K562 (cell line): ENCODE measurements at regions of chr5 and their contacts with region 1.

Region 1: DNA sequence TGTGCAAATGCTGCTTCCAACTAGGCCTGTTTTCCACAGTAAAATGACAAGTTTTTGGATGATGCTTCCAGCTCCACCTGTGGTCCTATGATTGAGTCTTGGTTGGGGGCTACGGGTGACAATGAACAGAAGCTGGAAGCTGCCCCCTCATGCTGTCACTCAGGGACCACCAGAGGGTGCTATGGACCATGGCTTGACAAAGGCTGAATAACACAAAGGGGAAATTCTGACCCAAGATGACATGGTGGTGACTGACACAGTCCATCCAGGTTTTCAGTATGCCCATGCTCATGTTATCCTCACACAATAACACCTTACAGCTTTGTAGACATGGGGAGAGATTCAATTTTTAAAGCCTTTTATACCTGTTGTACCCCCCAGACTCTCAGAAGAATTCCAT is 23.9 kb upstream of the SAP30L start:
- DNase-seq: peak; percentile 45 to 66 (median 56)
- ATAC-seq: peak; percentile 94
- H3K4me3 ChIP-seq: no peak overlapping the region
- H3K27ac ChIP-seq: no peak overlapping the region
- H3K4me1 ChIP-seq: peaks cover 0 to 8% of the 10 kb centered on the region in 2 experiments; a peak in 2 of 5 replicates
- H3K27me3 ChIP-seq: no peaks in the 10 kb centered on the region
- CTCF ChIP-seq: peak; percentile 67 to 80 (median 73)
- EP300 ChIP-seq: no peak
- POLR2A ChIP-seq: no peak
- RAD21 ChIP-seq: peak; percentile 21 to 64; a peak in 2 of 4 replicates

Region 2: GRCh38 chr5:154520861-154521453 is 99.1 kb after region 1 on chr5:
- CTCF ChIA-PET with region 1: no interaction called
- POLR2A ChIA-PET with region 1: no interaction called
- in situ Hi-C with region 1: no loop called
- intact Hi-C with region 1: loop called (anchors 5 kb)
- DNase-seq: peak; percentile 42 to 68 (median 60)
- ATAC-seq: peak; percentile 66
- H3K4me3 ChIP-seq: no peak overlapping the region
- H3K27ac ChIP-seq: no peak overlapping the region
- H3K4me1 ChIP-seq: peaks cover 12 to 27% of the 10 kb centered on the region in 2 experiments; a peak in 4 of 5 replicates
- H3K27me3 ChIP-seq: peaks cover 12 to 37% of the 10 kb centered on the region in 2 experiments; a peak in 4 of 5 replicates
- CTCF ChIP-seq: peak; percentile 63 to 89 (median 68)
- EP300 ChIP-seq: no peak
- POLR2A ChIP-seq: no peak
- RAD21 ChIP-seq: peak in 1 of 2 experiments; percentile 41; a peak in 2 of 4 replicates